Posterior cingulate gyrus (tissue), 11 donors: ENCODE measurements at regions of chr2 and their contacts with region 1.

Region 1: GRCh38 chr2:170815746-170816503 is 762 bp upstream of the GAD1 start:
- DNase-seq: peak in 6 of 10 donors; percentile 50 to 91 (median 74)

Region 2: GRCh38 chr2:170235860-170236679 is 579.9 kb before region 1 on chr2:
- intact Hi-C with region 1: loop called (anchors 5 kb)
- DNase-seq: no peak

Region 3: DNA sequence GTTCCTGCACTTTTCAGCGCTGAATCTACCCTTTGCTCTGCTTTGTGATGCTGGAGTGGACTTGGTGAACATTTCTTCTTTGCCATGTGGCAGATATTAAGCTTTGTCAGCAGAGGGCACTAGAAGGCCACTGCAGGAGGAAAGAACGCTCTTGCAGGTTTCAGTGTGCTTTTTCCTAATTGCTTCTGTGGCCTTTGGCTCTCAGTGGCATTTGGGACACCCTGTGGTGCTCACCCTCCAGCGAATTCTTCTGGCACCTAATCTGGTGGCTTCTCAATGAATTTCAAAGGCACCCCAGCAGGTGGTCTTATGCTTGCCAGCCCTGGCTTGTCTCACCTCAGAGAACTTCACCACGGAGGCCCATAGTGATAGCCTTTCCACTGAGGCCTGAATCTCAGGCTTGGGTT is 491.3 kb before region 1 on chr2:
- intact Hi-C with region 1: loop called (anchors 5 kb)
- DNase-seq: peak in 2 of 10 donors; percentile 10 to 11

Region 4: GRCh38 chr2:170361090-170361936 is 454.6 kb before region 1 on chr2:
- intact Hi-C with region 1: loop called (anchors 5 kb)
- DNase-seq: peak in 4 of 10 donors; percentile 13 to 47 (median 36)

Region 5: DNA sequence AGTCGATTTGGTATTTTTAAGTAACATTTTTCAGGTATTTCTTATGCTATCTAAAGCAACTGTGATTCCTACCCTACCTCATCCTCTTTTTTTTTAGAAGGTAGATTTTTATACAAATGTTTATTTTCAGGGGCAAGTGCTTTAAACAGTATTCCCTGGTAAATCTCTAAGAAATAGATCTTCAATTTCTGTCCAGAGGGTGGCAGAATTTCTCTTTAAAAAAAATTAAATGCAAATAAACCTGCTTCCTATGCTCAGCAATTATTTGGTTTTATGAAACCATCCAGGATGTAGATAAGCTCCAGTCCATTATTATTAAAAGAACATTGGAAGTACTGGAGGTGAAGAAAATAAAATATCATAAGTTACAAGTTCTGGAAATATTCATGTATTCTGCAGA is 446.0 kb before region 1 on chr2:
- intact Hi-C with region 1: loop called (anchors 5 kb)
- DNase-seq: no peak

Region 6: GRCh38 chr2:170409164-170409535 is 406.8 kb before region 1 on chr2:
- intact Hi-C with region 1: loop called (anchors 1 kb)
- DNase-seq: peak in 8 of 10 donors; percentile 25 to 83 (median 66)

Region 7: DNA sequence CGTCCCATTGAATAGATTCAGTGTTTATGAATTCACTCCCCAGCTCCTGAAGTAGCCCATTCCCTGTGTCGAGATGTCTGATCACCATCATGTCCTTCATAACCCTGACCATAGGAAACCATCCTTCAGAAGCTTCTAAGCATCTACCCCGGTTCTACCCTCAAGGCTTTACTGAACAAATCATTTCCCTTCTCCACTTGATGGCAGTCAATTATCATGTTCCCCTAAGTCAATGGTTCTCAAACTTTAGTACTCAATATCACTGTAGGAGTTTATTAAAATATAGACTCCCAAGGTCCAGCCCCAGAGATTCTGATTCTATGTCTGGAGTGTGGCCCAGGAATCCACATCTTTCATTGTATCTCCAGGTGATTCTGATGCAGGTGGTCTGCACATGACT is 329.2 kb before region 1 on chr2:
- intact Hi-C with region 1: loop called (anchors 1 kb)
- DNase-seq: no peak

Region 8: GRCh38 chr2:170567429-170567828 is 248.5 kb before region 1 on chr2:
- intact Hi-C with region 1: no loop called
- DNase-seq: no peak